ENCODE measurements at regions of chr2 and their contacts with region 1.

Region 1: GRCh38 chr2:158745044-158745865 is 49.9 kb upstream of the DAPL1 start:
- DNase-seq: peak; percentile 66
- ATAC-seq: peak; percentile 82
- H3K4me3 Mint-ChIP-seq: peak overlapping the region; percentile 71
- H3K27ac Mint-ChIP-seq: 0 out of 2 replicates have a peak overlapping the region, but pooled peaks have one; percentile 25
- H3K4me1 Mint-ChIP-seq: peaks cover 23% of the 10 kb centered on the region
- H3K27me3 Mint-ChIP-seq: peaks cover 8% of the 10 kb centered on the region
- CTCF ChIP-seq: peak; percentile 5; the same call in 1 of the 2 replicates

Region 2: GRCh38 chr2:158024288-158024898 is 720.9 kb before region 1 on chr2:
- CTCF ChIA-PET with region 1: interaction called, 40 read pairs
- POLR2A ChIA-PET with region 1: no interaction called
- DNase-seq: peak; percentile 65
- ATAC-seq: peak; percentile 60
- H3K4me3 Mint-ChIP-seq: no peak overlapping the region
- H3K27ac Mint-ChIP-seq: no peak overlapping the region
- H3K4me1 Mint-ChIP-seq: 0 out of 2 replicates have a peak, but pooled peaks cover 2% of the 10 kb centered on the region
- H3K27me3 Mint-ChIP-seq: no peaks in the 10 kb centered on the region; the same call in 1 of the 2 replicates
- CTCF ChIP-seq: peak; percentile 71

Region 3: DNA sequence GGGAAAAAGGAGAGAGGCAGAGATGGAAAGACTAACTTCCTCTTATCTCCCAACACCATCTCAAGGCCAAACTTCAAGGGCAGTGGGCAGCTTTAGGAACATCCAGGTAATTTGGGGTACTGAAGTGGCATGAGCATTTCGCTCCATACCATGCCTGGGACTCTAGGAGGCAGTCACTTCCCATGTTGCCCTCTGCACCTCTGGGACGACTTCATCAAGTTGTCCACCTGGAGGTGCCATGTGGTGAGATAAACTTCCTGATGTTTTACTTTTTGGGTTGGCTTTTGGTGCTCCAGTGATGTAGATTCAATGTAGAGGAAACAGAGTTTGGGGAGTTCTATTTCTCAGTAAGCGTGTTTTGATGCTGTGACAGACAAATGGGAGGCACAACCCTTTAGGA is 699.9 kb before region 1 on chr2:
- CTCF ChIA-PET with region 1: interaction called, 13 read pairs
- POLR2A ChIA-PET with region 1: no interaction called
- DNase-seq: peak; percentile 42
- ATAC-seq: peak; percentile 91
- H3K4me3 Mint-ChIP-seq: no peak overlapping the region
- H3K27ac Mint-ChIP-seq: no peak overlapping the region
- H3K4me1 Mint-ChIP-seq: peaks cover 12% of the 10 kb centered on the region
- H3K27me3 Mint-ChIP-seq: no peaks in the 10 kb centered on the region
- CTCF ChIP-seq: no peak

Region 4: GRCh38 chr2:158473719-158474392 is 271.4 kb before region 1 on chr2:
- CTCF ChIA-PET with region 1: interaction called, 12 read pairs
- POLR2A ChIA-PET with region 1: no interaction called
- DNase-seq: no peak
- ATAC-seq: peak; percentile 70
- H3K4me3 Mint-ChIP-seq: no peak overlapping the region
- H3K27ac Mint-ChIP-seq: peak overlapping the region; percentile 15
- H3K4me1 Mint-ChIP-seq: peaks cover 53% of the 10 kb centered on the region
- H3K27me3 Mint-ChIP-seq: no peaks in the 10 kb centered on the region
- CTCF ChIP-seq: no peak

Region 5: GRCh38 chr2:158688722-158689121 is 56.5 kb before region 1 on chr2:
- CTCF ChIA-PET with region 1: interaction called, 15 read pairs
- POLR2A ChIA-PET with region 1: no interaction called
- DNase-seq: no peak
- ATAC-seq: peak; percentile 30
- H3K4me3 Mint-ChIP-seq: no peak overlapping the region
- H3K27ac Mint-ChIP-seq: no peak overlapping the region
- H3K4me1 Mint-ChIP-seq: peaks cover 11% of the 10 kb centered on the region
- H3K27me3 Mint-ChIP-seq: no peaks in the 10 kb centered on the region; the same call in 1 of the 2 replicates
- CTCF ChIP-seq: no peak

Region 6: GRCh38 chr2:158733430-158733755 is 11.9 kb before region 1 on chr2:
- CTCF ChIA-PET with region 1: interaction called, 132 read pairs
- POLR2A ChIA-PET with region 1: no interaction called
- DNase-seq: no peak
- ATAC-seq: no peak
- H3K4me3 Mint-ChIP-seq: no peak overlapping the region
- H3K27ac Mint-ChIP-seq: no peak overlapping the region
- H3K4me1 Mint-ChIP-seq: peaks cover 4% of the 10 kb centered on the region; the same call in 1 of the 2 replicates
- H3K27me3 Mint-ChIP-seq: no peaks in the 10 kb centered on the region
- CTCF ChIP-seq: no peak

Region 7: GRCh38 chr2:158889135-158889853 is 144.0 kb after region 1 on chr2:
- CTCF ChIA-PET with region 1: no interaction called
- POLR2A ChIA-PET with region 1: no interaction called
- DNase-seq: no peak
- ATAC-seq: no peak
- H3K4me3 Mint-ChIP-seq: no peak overlapping the region
- H3K27ac Mint-ChIP-seq: no peak overlapping the region
- H3K4me1 Mint-ChIP-seq: no peaks in the 10 kb centered on the region
- H3K27me3 Mint-ChIP-seq: no peaks in the 10 kb centered on the region
- CTCF ChIP-seq: no peak

Measured in WTC11 (cell line).